ENCODE measurements at regions of chr1 and their contacts with region 1.

Region 1: DNA sequence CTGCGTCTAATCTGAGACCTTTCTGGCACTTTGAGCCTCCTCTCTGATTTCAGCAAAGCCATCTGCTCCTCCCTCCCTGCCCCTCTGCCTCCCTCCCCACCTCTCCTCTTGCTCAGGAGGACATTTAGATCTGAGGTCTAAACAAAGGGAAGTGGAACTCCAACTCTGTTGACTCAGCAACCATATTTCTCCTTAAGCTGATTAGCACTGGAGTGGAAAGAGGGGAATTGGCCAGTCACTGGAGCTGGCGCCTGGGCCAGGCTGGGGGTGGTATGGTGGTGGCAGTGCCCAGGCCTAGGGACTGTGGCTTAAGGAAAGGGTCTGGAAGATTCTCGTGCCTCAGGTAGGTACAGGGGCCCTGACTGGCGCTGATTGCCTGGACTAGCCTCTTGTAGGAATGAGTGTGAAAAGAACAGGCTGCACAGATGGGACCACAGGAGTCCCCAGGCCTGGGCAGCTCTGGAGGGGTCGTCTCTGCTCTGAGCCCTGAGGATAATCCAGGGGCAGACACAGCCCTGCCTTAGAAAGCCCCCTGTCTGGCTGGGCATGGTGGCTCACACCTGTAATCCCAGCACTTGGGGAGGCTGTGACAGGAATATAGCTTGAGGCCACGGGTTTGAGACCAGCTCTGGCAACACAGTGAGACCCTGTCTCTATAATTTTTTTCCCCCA is 11.9 kb downstream of the SH2D2A start:
- H3K4me3 Mint-ChIP-seq: peak overlapping the region; percentile 42
- H3K27ac Mint-ChIP-seq: peak overlapping the region; percentile 92
- H3K4me1 Mint-ChIP-seq: peaks cover 61% of the 10 kb centered on the region
- H3K27me3 Mint-ChIP-seq: peaks cover 15% of the 10 kb centered on the region

Region 2: DNA sequence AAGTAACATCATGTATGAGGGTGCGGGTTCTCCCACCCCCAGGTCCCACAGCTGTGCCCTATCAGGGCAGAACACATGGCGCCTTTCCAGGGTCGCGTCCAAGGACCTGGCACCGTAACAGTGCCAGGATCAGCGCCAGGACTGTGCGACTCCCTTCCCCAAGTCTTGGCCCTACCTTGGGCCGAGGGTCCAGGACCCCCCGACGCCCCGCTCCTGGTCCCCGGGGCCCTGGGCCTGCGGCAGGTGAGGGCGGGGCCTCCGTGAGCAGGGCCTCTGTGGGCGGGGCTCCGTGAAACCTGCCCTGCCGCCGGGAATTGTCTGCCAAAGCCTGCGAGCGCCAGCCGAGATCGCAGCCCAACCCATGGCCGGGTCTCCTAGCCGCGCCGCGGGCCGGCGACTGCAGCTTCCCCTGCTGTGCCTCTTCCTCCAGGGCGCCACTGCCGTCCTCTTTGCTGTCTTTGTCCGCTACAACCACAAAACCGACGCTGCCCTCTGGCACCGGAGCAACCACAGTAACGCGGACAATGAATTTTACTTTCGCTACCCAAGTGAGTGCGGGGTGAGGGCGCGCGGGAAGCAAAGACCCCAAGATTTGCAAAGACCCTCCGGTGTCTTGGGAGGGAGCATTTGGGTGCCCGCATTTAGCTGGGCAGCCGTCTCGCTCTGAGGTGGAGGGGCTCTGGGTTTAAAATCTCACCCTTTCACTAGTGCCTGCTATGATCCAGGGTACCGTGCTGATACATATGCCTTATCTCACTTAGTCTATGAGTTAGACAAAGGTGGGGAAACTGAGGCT is 435.6 kb before region 1 on chr1 and contains the start of gene RHBG:
- intact Hi-C with region 1: no loop called
- H3K4me3 Mint-ChIP-seq: peak within 1 kb of the TSS; percentile 64
- H3K27ac Mint-ChIP-seq: no peak within 1 kb of the TSS
- H3K4me1 Mint-ChIP-seq: peaks cover 26% of the 10 kb centered on the region
- H3K27me3 Mint-ChIP-seq: peaks cover 58% of the 10 kb centered on the region

Region 3: GRCh38 chr1:156767101-156767878 is 37.4 kb before region 1 on chr1 and contains the start of gene PRCC:
- intact Hi-C with region 1: no loop called
- H3K4me3 Mint-ChIP-seq: no peak within 1 kb of the TSS
- H3K27ac Mint-ChIP-seq: no peak within 1 kb of the TSS
- H3K4me1 Mint-ChIP-seq: peaks cover 53% of the 10 kb centered on the region
- H3K27me3 Mint-ChIP-seq: no peaks in the 10 kb centered on the region

Region 4: DNA sequence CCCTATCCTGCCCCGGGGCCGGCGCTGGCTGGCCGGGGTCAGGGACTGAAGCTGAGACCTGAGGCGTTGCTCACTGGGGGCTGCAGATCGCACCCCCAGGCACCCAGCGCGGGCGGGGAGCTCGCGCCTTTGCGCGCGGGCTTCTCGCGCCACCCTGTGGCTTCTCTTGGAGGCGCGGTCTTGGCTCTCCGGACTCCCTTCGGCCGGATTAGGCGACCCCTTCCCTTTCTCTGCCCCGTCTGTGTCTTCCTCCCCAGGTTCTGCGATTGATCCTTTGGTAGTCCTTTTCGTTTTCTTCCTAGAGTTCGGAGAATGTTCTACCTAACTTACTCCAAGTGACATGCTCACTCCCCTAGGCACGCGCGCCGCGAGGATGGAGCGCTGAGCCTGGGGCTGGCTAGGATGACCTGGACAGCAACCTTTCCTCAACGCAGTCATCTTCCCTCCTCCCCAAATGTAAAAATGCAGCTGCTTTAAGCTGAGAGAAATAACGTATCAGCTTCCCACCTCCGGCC is 55.5 kb after region 1 on chr1:
- intact Hi-C with region 1: loop called (anchors 2 kb)
- H3K4me3 Mint-ChIP-seq: peak overlapping the region; percentile 44
- H3K27ac Mint-ChIP-seq: no peak overlapping the region
- H3K4me1 Mint-ChIP-seq: peaks cover 28% of the 10 kb centered on the region
- H3K27me3 Mint-ChIP-seq: peaks cover 84% of the 10 kb centered on the region

Measured in dendritic cell treated with granulocyte-macrophage colony-stimulating factor and Interleukin-4, amounts not matched to agents 40 ng/mL and 50 ng/mL, for 4 days (primary cell).